ENCODE measurements at regions of chr17 and their contacts with region 1.

Region 1: GRCh38 chr17:2416010-2416734 is 15.3 kb upstream of the MNT start:
- DNase-seq: peak; percentile 76 to 88 (median 82)
- H3K4me3 ChIP-seq: no peak overlapping the region
- H3K4me3 Mint-ChIP-seq: no peak overlapping the region
- H3K27ac ChIP-seq: no peak overlapping the region
- H3K27ac Mint-ChIP-seq: peak overlapping the region in 6 of 8 donors; percentile 2 to 93 (median 47)
- H3K4me1 ChIP-seq: no peaks in the 10 kb centered on the region
- H3K4me1 Mint-ChIP-seq: peaks cover 2 to 7% (median 3%) of the 10 kb centered on the region in 3 donors
- H3K27me3 ChIP-seq: no peaks in the 10 kb centered on the region
- H3K27me3 Mint-ChIP-seq: peaks cover 0 to 2% of the 10 kb centered on the region in 2 donors

Region 2: DNA sequence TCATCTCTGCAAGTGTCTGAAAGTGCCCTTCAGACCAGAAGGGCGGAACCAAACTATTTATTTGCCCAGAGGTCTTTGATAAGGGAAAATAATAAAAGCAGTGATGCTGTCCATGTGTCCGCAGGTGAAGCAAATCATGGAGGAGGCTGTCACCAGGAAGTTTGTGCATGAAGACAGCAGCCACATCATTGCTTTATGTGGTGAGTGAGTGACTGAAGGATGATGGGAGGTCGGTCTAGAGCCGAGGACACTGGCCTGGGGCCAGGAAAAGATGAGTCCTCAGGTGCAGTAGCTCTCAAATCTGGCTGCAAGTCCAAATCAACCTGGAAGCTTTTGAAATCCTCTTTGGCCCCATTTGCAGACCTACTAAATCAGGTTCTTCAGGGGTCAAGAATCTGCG is 72.8 kb before region 1 on chr17:
- CTCF ChIA-PET with region 1: no interaction called
- POLR2A ChIA-PET with region 1: no interaction called
- DNase-seq: peak in 2 of 5 donors; percentile 20 to 78
- H3K4me3 ChIP-seq: no peak overlapping the region
- H3K4me3 Mint-ChIP-seq: peak overlapping the region in 2 of 7 donors; percentile 24 to 42
- H3K27ac ChIP-seq: no peak overlapping the region
- H3K27ac Mint-ChIP-seq: peak overlapping the region in 3 of 8 donors; percentile 27 to 81 (median 80)
- H3K4me1 ChIP-seq: peaks cover 1% of the 10 kb centered on the region
- H3K4me1 Mint-ChIP-seq: peaks cover 14 to 38% (median 15%) of the 10 kb centered on the region in 3 donors
- H3K27me3 ChIP-seq: no peaks in the 10 kb centered on the region
- H3K27me3 Mint-ChIP-seq: no peaks in the 10 kb centered on the region

Region 3: GRCh38 chr17:2380226-2380922 is 35.8 kb before region 1 on chr17:
- CTCF ChIA-PET with region 1: interaction called, 250 read pairs
- POLR2A ChIA-PET with region 1: interaction called, 14 read pairs
- DNase-seq: no peak
- H3K4me3 ChIP-seq: no peak overlapping the region
- H3K4me3 Mint-ChIP-seq: no peak overlapping the region
- H3K27ac ChIP-seq: no peak overlapping the region
- H3K27ac Mint-ChIP-seq: peak overlapping the region in 2 of 8 donors; percentile 19 to 73
- H3K4me1 ChIP-seq: no peaks in the 10 kb centered on the region
- H3K4me1 Mint-ChIP-seq: peaks cover 0 to 7% (median 3%) of the 10 kb centered on the region in 3 donors
- H3K27me3 ChIP-seq: no peaks in the 10 kb centered on the region
- H3K27me3 Mint-ChIP-seq: peaks cover 0 to 1% of the 10 kb centered on the region in 2 donors

Region 4: GRCh38 chr17:2386400-2387085 is 29.6 kb before region 1 on chr17:
- CTCF ChIA-PET with region 1: interaction called, 250 read pairs
- POLR2A ChIA-PET with region 1: interaction called, 14 read pairs
- DNase-seq: no peak
- H3K4me3 ChIP-seq: no peak overlapping the region
- H3K4me3 Mint-ChIP-seq: no peak overlapping the region
- H3K27ac ChIP-seq: no peak overlapping the region
- H3K27ac Mint-ChIP-seq: peak overlapping the region in 3 of 8 donors; percentile 19 to 41 (median 23)
- H3K4me1 ChIP-seq: peaks cover 16% of the 10 kb centered on the region
- H3K4me1 Mint-ChIP-seq: peaks cover 2 to 36% (median 15%) of the 10 kb centered on the region in 3 donors
- H3K27me3 ChIP-seq: no peaks in the 10 kb centered on the region
- H3K27me3 Mint-ChIP-seq: peaks cover 0 to 1% of the 10 kb centered on the region in 2 donors

Region 5: DNA sequence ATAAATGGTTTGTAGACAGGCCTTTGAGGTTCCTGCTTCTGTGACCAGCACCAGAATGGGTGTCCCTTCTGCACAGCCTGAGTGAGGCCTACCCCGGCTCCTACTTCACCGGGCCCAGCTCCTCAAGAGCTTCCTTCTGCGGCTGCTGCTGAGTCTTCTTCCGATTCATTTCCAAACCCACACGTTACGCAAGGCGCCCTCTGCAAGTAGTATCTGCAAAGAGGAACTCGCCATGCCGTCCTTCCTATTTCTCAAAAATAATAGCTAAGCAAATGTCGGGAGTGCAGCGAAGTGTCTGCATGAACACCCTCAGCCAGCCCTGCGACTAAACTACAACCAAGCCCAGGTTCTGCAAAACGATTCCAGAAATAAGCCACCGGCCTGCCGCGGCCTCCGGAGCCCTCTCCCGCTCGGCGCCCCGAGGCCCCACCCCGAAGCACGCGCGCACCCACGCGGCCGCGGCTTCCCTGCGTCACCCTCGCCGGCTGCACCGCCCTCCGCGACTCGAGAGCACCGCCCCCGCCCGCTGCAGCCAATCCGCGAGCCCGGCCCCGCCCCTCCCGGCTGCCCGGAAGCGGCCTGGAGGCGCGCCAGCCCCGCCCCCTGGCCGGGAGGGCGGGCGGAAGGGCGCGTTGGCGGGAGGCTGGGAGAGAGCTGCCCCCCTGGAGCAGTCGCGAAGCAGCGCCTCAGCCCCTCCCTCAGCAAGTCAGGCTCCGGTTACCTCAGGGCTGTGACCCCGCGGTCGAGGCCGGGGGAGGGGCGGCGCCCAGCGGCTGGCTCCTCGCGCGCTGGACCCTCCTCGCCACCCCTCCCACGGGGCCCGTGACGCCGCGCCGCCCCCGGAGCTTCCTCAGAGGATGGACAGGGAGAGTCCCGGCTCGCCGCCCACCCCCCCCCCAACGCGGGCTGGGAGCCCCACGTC is 23.7 kb before region 1 on chr17:
- CTCF ChIA-PET with region 1: interaction called, 15 read pairs
- POLR2A ChIA-PET with region 1: no interaction called
- DNase-seq: peak; percentile 96 to 98 (median 97)
- H3K4me3 ChIP-seq: peak overlapping the region; percentile 78
- H3K4me3 Mint-ChIP-seq: peak overlapping the region; percentile 90 to 99 (median 91)
- H3K27ac ChIP-seq: peak overlapping the region; percentile 98
- H3K27ac Mint-ChIP-seq: peak overlapping the region; percentile 93 to 100 (median 98)
- H3K4me1 ChIP-seq: peaks cover 50% of the 10 kb centered on the region
- H3K4me1 Mint-ChIP-seq: peaks cover 24 to 70% (median 34%) of the 10 kb centered on the region in 3 donors
- H3K27me3 ChIP-seq: no peaks in the 10 kb centered on the region
- H3K27me3 Mint-ChIP-seq: peaks cover 0 to 4% of the 10 kb centered on the region in 2 donors

Region 6: GRCh38 chr17:2401426-2402221 is 14.5 kb before region 1 on chr17:
- CTCF ChIA-PET with region 1: interaction called, 23 read pairs
- POLR2A ChIA-PET with region 1: interaction called, 8 read pairs
- DNase-seq: peak; percentile 99 to 100 (median 100)
- H3K4me3 ChIP-seq: peak overlapping the region; percentile 79
- H3K4me3 Mint-ChIP-seq: peak overlapping the region; percentile 90 to 100 (median 98)
- H3K27ac ChIP-seq: peak overlapping the region; percentile 96
- H3K27ac Mint-ChIP-seq: peak overlapping the region; percentile 98 to 100 (median 99)
- H3K4me1 ChIP-seq: peaks cover 35% of the 10 kb centered on the region
- H3K4me1 Mint-ChIP-seq: peaks cover 31 to 42% (median 36%) of the 10 kb centered on the region in 3 donors
- H3K27me3 ChIP-seq: no peaks in the 10 kb centered on the region
- H3K27me3 Mint-ChIP-seq: peaks cover 0 to 3% of the 10 kb centered on the region in 2 donors

Region 7: GRCh38 chr17:2433696-2434095 is 17.5 kb after region 1 on chr17:
- CTCF ChIA-PET with region 1: interaction called, 14 read pairs
- POLR2A ChIA-PET with region 1: no interaction called
- DNase-seq: no peak
- H3K4me3 ChIP-seq: no peak overlapping the region
- H3K4me3 Mint-ChIP-seq: no peak overlapping the region
- H3K27ac ChIP-seq: no peak overlapping the region
- H3K27ac Mint-ChIP-seq: peak overlapping the region in 2 of 8 donors; percentile 55 to 71
- H3K4me1 ChIP-seq: no peaks in the 10 kb centered on the region
- H3K4me1 Mint-ChIP-seq: peaks cover 0 to 2% (median 0%) of the 10 kb centered on the region in 3 donors
- H3K27me3 ChIP-seq: no peaks in the 10 kb centered on the region
- H3K27me3 Mint-ChIP-seq: no peaks in the 10 kb centered on the region

Region 8: DNA sequence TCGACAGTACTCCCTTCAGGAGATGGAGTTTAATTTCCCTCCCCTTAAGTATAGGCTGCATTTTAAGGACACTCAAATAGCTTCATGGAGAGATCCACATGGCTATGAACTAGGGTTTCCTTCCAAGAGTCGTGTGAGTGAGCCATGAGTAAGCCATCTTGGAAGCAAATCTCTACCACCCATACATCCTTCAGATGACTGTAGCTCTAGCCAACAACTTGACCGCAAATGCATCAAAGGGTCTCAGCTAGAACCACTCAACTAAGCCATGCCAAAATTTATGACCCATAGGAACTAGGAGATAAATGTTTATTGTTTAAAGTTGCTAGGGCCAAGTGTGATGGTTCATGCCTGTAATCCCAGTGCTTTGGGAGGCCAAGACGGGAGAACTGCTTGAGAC is 52.1 kb after region 1 on chr17:
- CTCF ChIA-PET with region 1: no interaction called
- POLR2A ChIA-PET with region 1: no interaction called
- DNase-seq: no peak
- H3K4me3 ChIP-seq: no peak overlapping the region
- H3K4me3 Mint-ChIP-seq: no peak overlapping the region
- H3K27ac ChIP-seq: no peak overlapping the region
- H3K27ac Mint-ChIP-seq: no peak overlapping the region
- H3K4me1 ChIP-seq: no peaks in the 10 kb centered on the region
- H3K4me1 Mint-ChIP-seq: no peaks in the 10 kb centered on the region
- H3K27me3 ChIP-seq: no peaks in the 10 kb centered on the region
- H3K27me3 Mint-ChIP-seq: no peaks in the 10 kb centered on the region